Activated naive CD8-positive, alpha-beta T cell treated with anti-CD3 and anti-CD28 coated beads, Interleukin-2, amount 10 ng/mL, durations not matched to agents 7 days and 5 days (primary cell): ENCODE measurements at regions of chr3 and their contacts with region 1.

Region 1: DNA sequence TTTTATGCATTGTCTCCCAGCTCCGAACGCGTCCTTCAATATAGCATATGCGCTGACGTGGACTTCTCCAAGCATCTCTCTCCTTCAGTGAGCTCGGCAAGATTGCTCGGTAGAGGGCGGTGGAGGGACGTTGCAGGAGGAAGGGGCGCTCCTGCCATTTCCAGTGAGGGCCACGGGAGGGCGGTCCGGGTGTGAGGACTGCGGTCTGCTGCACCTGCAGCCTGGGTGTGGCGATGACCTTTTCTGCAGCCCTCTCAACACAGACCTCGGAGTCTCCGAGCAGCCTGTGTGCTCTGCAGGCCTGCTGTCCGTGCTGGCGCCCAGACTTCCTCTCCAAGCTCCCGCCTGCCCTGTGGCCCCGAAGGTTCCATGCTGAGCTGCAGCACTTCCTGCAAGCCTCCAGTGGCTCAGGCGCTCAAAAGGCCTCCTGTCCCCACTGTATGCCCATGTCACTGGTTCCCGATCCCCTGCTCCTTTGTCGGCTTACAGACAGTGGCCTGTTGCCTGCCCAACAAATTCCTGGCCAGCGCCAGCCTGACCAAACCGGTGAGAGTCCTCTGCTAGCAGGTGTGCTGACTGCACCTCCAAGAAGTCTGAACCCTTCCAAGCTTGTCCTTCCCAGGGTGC is 8.9 kb upstream of the RTP3 start:
- DNase-seq: peak; percentile 91
- ATAC-seq: peak; percentile 97
- H3K4me3 Mint-ChIP-seq: peak overlapping the region; percentile 62
- H3K27ac Mint-ChIP-seq: peak overlapping the region; percentile 43
- H3K4me1 Mint-ChIP-seq: peaks cover 11% of the 10 kb centered on the region
- H3K27me3 Mint-ChIP-seq: peaks cover 7% of the 10 kb centered on the region

Region 2: DNA sequence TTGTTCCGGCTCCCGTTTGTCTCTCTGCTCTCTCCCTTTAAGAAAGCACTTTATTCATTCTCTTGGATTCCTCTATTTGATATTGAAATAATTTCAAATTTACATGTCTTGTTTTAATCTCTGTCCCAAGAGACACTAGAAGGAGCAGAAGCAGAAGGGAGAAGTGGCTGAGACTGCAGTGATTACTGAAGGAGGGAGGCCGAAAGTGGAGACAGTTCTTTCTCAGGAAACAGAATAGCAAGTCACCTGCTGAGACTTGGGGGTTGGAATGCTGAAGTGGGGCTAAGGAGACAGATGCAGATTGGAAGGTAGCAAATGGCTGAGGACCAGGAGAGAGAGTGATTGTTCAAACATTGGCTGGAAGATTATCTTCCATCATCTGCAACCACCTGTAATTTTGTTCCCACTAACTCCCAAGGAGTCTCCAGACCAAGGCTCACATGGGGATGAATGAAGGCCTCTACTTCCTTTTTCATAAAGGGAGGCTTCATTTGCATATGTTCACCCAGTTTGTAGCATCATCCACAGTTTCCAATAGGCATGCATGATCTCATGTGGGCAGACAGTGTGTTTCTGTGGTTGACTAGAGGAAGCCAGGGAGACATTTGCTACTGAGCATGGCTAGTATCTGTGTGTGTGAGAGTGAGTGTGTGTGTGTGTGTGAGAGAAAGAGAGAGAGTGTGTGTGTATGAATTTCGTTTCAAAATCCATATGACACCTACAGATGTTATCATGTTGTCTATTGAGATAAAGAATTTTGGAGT is 48.1 kb before region 1 on chr3:
- POLR2A ChIA-PET with region 1: no interaction called
- DNase-seq: no peak
- ATAC-seq: peak; percentile 96
- H3K4me3 Mint-ChIP-seq: peak overlapping the region; percentile 3
- H3K27ac Mint-ChIP-seq: peak overlapping the region; percentile 7
- H3K4me1 Mint-ChIP-seq: peaks cover 29% of the 10 kb centered on the region
- H3K27me3 Mint-ChIP-seq: no peaks in the 10 kb centered on the region

Region 3: DNA sequence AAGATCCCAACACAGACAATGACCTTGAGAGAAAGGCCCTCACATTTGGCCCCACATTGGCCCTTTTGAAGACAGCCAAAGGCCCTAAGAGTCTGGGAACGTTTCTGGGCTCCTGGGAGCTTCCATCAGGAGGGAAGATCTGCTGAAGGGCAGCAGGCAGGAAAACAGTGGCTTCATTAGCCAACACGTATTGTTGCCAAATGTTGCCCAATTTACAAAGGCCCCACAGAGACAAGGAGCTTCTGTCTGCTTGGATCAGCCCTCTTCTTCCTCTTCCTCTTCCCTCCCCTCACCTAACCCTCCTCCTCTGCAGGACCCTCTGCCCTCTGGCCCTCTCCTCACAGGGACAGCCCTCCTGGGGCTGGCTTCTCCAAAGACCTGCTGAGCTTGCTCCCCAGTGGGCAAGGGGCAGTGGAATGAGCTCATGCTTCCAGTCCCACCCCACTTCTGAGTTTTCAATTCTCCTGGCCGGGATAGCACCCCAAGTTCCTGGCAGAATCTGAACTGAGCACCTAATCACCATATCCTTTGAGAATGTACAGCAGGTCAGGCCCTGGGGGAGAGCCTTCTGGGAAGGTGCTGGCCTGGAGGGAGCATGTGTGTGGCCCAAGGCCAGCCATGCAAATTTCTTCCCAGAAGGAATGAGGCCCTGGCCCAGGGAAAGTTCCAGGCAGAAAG is 19.0 kb before region 1 on chr3:
- POLR2A ChIA-PET with region 1: no interaction called
- DNase-seq: no peak
- ATAC-seq: no peak
- H3K4me3 Mint-ChIP-seq: no peak overlapping the region
- H3K27ac Mint-ChIP-seq: no peak overlapping the region
- H3K4me1 Mint-ChIP-seq: no peaks in the 10 kb centered on the region
- H3K27me3 Mint-ChIP-seq: peaks cover 57% of the 10 kb centered on the region

Region 4: GRCh38 chr3:46508850-46509591 is 20.2 kb after region 1 on chr3:
- POLR2A ChIA-PET with region 1: no interaction called
- DNase-seq: no peak
- ATAC-seq: no peak
- H3K4me3 Mint-ChIP-seq: no peak overlapping the region
- H3K27ac Mint-ChIP-seq: no peak overlapping the region
- H3K4me1 Mint-ChIP-seq: no peaks in the 10 kb centered on the region
- H3K27me3 Mint-ChIP-seq: peaks cover 18% of the 10 kb centered on the region

Region 5: GRCh38 chr3:46538803-46539442 is 50.1 kb after region 1 on chr3:
- POLR2A ChIA-PET with region 1: interaction called, 14 read pairs
- DNase-seq: peak; percentile 75
- ATAC-seq: peak; percentile 97
- H3K4me3 Mint-ChIP-seq: peak overlapping the region; percentile 60
- H3K27ac Mint-ChIP-seq: peak overlapping the region; percentile 91
- H3K4me1 Mint-ChIP-seq: peaks cover 31% of the 10 kb centered on the region
- H3K27me3 Mint-ChIP-seq: peaks cover 26% of the 10 kb centered on the region

Region 6: DNA sequence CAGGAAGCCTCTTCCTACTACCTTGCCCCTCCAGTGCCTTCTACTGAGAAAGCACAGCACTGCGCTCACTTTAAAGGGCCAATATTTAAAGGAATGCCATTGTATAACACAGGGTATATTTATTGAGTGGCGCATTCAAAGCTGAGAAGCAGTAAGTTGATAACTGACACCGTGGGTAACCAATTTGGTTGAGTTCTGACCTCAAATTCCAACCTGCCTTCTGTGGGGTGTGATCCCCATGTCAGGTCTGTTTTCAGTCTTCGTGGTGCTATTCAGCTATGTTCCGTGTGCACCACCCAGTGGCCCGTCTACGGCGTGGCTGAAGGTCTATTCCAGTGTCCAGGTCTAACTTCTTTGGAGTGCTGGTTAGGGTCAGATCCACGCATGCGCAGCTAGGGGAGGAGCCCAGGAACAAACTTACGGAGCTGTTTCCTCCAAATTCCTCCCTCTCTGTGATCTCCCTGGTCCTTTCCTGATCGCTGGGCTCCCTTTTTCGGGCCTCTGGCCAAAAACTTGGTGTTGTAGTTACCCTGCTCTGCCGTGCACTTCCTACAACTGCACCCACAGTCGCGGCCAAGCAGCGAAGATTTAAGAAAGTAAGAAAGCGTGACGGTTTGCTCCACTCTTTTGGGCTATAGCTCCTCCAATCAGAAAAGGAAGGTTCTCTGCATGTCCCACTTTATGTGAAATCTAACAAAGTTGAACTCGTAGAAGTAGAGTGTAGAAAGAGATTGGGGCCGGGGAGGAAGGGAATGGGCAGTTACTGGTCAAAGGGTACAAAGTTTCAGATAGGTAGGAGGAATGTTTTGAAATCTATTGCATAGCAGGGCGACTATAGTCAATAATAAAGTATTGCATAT is 69.6 kb after region 1 on chr3:
- POLR2A ChIA-PET with region 1: interaction called, 13 read pairs
- DNase-seq: peak; percentile 71
- ATAC-seq: peak; percentile 99
- H3K4me3 Mint-ChIP-seq: peak overlapping the region; percentile 80
- H3K27ac Mint-ChIP-seq: peak overlapping the region; percentile 54
- H3K4me1 Mint-ChIP-seq: peaks cover 10% of the 10 kb centered on the region
- H3K27me3 Mint-ChIP-seq: peaks cover 45% of the 10 kb centered on the region

Region 7: DNA sequence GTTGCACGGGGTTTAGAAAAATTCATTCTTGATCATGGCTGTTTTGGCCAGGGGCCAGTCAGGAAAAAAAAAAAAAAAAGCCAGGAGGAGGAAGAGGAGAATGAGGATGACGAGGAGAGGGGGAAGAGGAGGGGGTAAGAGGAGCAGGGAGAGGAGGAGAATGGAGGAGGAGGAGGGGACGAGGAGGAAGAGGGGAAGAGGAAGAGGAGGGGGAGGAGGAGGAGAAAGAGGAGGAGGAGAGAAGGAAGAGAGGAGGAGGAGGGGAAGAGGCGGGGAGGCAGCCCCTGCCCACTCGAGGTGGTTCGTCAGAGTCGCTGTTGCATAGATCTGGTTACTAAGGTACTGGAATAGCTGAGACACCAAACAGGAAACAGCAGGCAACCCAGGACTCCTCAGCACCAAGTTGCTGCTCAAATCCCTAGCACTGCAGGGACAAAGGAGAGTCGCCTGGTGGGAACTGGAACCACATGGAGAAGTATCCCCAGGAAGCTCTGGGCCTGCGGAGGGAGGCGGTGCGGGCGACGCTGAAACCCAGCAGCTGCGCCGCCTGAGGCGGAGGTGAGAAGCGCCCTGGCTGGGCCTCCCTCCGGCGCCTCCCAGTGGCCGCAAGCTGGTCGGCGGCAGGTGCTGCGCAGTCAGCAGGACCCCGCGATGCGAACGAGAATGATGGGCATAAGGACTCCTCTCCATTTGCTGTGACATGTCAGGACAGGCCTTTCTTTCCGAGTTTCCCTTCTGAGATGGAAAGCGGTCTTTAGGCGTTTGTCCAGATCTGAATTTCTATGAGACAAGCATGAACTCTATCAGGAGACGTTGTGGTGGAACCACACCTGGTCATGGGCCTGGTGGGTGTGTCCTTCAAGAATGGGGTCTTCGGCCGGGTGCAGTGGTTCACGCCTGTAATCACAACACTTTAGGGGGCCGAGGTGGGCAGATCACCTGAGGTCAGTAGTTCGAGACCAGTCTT is 141.0 kb after region 1 on chr3:
- POLR2A ChIA-PET with region 1: interaction called, 12 read pairs
- DNase-seq: peak; percentile 85
- ATAC-seq: peak; percentile 99
- H3K4me3 Mint-ChIP-seq: peak overlapping the region; percentile 64
- H3K27ac Mint-ChIP-seq: peak overlapping the region; percentile 68
- H3K4me1 Mint-ChIP-seq: peaks cover 14% of the 10 kb centered on the region
- H3K27me3 Mint-ChIP-seq: peaks cover 9% of the 10 kb centered on the region